Natural killer cell (primary cell): ENCODE measurements at regions of chr5 and their contacts with region 1.

Region 1: DNA sequence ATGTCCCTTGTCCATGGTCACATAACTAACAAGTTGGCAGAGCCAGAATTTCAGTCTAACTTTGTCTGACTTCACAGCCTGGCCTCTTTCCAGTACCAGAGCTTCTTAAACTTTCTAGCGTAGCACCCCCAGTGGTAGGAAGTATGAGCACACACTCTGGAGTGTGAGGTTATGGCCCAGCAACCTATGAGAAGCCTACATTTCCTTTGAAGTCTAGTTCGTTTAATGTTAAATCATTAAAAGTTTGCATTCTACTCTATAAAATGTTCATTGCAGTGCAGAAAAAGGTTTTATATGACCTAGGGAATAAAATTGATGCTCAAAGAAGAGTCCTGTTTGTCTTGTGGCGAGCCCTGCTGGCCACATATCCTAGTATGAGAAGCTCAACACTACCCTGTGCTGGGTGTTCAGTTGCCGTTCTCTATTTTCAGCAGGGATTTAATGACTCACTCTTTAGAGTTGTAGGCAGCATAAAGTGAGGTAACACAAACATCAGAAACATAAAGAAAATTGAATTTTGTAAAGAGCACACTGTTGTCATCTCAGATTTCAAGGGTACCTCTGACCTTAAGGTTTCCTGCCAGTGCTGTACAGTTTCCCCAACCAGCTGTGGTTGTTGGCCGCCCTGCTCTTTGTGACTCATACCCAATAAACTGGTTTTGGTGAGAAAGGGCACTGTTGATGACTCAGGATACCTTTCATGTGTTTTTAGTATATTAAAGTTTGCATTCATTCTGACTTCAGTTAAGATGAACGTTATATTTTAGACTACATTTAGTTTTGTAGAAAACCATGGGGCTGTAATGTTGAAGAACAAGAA is 14.3 kb downstream of the MCCC2 start:
- DNase-seq: peak; percentile 59 to 83
- ATAC-seq: peak; percentile 87 to 93 (median 90)
- H3K4me3 ChIP-seq: no peak overlapping the region
- H3K4me3 Mint-ChIP-seq: peak overlapping the region; percentile 60
- H3K27ac ChIP-seq: peak overlapping the region; percentile 64
- H3K27ac Mint-ChIP-seq: peak overlapping the region; percentile 90 to 93
- H3K4me1 ChIP-seq: peaks cover 18% of the 10 kb centered on the region
- H3K4me1 Mint-ChIP-seq: peaks cover 21 to 24% of the 10 kb centered on the region in 2 donors
- H3K27me3 ChIP-seq: no peaks in the 10 kb centered on the region
- H3K27me3 Mint-ChIP-seq: no peaks in the 10 kb centered on the region
- CTCF ChIP-seq: peak; percentile 82

Region 2: GRCh38 chr5:71533614-71534013 is 67.8 kb before region 1 on chr5:
- intact Hi-C with region 1: loop called (anchors 2 kb)
- DNase-seq: peak in 1 of 2 donors; percentile 68
- ATAC-seq: peak; percentile 76 to 97 (median 85)
- H3K4me3 ChIP-seq: no peak overlapping the region
- H3K4me3 Mint-ChIP-seq: no peak overlapping the region
- H3K27ac ChIP-seq: no peak overlapping the region
- H3K27ac Mint-ChIP-seq: peak overlapping the region; percentile 62 to 76
- H3K4me1 ChIP-seq: no peaks in the 10 kb centered on the region
- H3K4me1 Mint-ChIP-seq: peaks cover 11 to 25% of the 10 kb centered on the region in 2 donors
- H3K27me3 ChIP-seq: no peaks in the 10 kb centered on the region
- H3K27me3 Mint-ChIP-seq: no peaks in the 10 kb centered on the region
- CTCF ChIP-seq: no peak

Region 3: DNA sequence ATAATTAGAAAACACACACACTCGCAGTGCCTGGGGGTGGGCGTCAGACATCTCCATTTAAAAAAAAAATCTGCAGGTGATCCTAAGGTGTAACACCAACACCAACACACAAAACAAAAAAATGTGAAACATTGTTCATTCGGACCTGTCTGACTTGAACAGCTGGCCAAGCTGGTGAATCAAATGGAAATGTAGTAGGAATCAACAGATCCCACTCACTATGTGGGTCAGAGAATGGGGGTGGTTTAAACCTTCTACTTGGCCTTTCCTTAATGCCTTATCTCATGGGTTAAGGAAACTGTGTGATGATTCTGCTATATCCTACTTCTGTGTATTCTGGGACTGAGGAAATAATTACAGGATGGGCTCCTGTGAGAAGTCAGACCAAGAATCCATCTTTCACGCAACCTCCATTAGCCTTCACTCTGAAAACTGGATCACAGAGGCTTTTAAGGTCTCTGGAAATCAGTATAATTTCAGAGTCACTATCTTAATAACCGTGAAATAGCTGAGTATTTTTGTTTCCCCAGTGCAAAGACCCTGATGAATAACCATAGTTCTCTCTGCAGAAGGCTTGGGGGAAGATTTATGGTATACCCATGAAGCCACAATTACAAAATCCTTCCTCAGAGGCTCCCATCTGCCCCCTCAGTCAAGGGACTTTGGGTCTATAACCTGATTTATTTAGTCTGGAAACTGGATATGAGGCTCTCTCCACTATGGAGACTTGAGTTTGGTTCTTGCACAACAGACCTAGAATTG is 31.5 kb before region 1 on chr5:
- intact Hi-C with region 1: no loop called
- DNase-seq: no peak
- ATAC-seq: no peak
- H3K4me3 ChIP-seq: no peak overlapping the region
- H3K4me3 Mint-ChIP-seq: no peak overlapping the region
- H3K27ac ChIP-seq: no peak overlapping the region
- H3K27ac Mint-ChIP-seq: no peak overlapping the region
- H3K4me1 ChIP-seq: no peaks in the 10 kb centered on the region
- H3K4me1 Mint-ChIP-seq: no peaks in the 10 kb centered on the region
- H3K27me3 ChIP-seq: no peaks in the 10 kb centered on the region
- H3K27me3 Mint-ChIP-seq: no peaks in the 10 kb centered on the region
- CTCF ChIP-seq: no peak

Region 4: DNA sequence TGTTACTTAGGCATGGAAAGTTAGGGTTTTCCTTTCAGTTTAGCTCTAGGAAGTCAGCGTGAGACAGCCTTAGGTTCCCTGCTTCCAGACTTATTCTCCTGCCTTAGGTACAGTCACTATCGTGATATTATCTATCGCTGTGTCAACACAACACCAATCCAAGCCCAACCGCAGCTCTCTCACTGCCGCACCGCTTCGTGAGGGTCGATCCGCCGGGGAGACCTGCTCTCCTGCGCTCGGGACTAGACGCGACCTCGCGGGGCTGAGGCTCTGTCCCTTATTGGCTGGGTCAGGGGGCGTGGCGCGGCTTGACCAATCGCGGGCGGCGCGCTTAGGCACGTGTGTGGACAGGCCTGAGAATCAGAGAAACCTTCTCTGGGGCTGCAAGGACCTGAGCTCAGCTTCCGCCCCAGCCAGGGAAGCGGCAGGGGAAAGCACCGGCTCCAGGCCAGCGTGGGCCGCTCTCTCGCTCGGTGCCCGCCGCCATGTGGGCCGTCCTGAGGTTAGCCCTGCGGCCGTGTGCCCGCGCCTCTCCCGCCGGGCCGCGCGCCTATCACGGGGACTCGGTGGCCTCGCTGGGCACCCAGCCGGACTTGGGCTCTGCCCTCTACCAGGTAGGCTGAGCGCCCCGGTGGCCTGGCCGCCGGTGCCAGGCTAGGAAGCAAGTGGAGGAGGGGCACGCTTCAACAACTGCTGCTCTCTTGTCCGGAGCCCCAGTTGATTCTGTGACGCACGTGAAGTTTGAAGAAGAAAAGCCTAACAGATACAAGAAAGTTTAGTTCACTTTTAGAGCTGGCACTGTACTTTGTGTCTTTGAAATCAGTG is 14.3 kb before region 1 on chr5 and contains the start of gene MCCC2:
- intact Hi-C with region 1: loop called (anchors 1 kb)
- DNase-seq: peak; percentile 97 to 98
- ATAC-seq: peak; percentile 95 to 99 (median 95)
- H3K4me3 ChIP-seq: peak within 1 kb of the TSS; percentile 71
- H3K4me3 Mint-ChIP-seq: peak within 1 kb of the TSS; percentile 94
- H3K27ac ChIP-seq: peak within 1 kb of the TSS; percentile 90
- H3K27ac Mint-ChIP-seq: peak within 1 kb of the TSS; percentile 94 to 97
- H3K4me1 ChIP-seq: peaks cover 17% of the 10 kb centered on the region
- H3K4me1 Mint-ChIP-seq: peaks cover 33 to 46% of the 10 kb centered on the region in 2 donors
- H3K27me3 ChIP-seq: no peaks in the 10 kb centered on the region
- H3K27me3 Mint-ChIP-seq: no peaks in the 10 kb centered on the region
- CTCF ChIP-seq: no peak
- total RNA-seq, gene MCCC2: 23.3 to 35.2 (median 32.5) TPM

Region 5: GRCh38 chr5:71732011-71732410 is 130.6 kb after region 1 on chr5:
- intact Hi-C with region 1: no loop called
- DNase-seq: no peak
- ATAC-seq: no peak
- H3K4me3 ChIP-seq: no peak overlapping the region
- H3K4me3 Mint-ChIP-seq: no peak overlapping the region
- H3K27ac ChIP-seq: no peak overlapping the region
- H3K27ac Mint-ChIP-seq: no peak overlapping the region
- H3K4me1 ChIP-seq: no peaks in the 10 kb centered on the region
- H3K4me1 Mint-ChIP-seq: no peaks in the 10 kb centered on the region
- H3K27me3 ChIP-seq: no peaks in the 10 kb centered on the region
- H3K27me3 Mint-ChIP-seq: peaks cover 9 to 21% of the 10 kb centered on the region in 2 donors
- CTCF ChIP-seq: no peak

Region 6: DNA sequence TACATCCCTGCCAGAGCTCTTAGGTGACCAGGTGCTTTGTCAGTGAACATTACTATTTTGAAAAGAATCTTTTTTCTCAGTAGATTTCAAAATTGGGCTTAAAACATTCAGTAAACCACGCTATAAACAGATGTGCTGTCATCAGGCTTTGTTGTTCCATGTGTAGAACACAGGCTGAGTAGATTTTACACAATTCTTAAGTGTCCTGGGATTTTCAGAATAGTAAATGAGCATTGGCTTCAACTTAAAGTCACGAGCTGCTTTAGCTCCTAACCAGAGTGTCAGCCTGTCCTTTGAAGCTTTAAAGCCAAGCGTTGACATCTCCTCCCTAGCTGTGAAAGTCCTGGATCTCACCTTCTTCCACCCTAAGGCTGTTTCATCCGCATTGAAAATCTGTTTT is 201.2 kb after region 1 on chr5:
- intact Hi-C with region 1: no loop called
- DNase-seq: no peak
- ATAC-seq: no peak
- H3K4me3 ChIP-seq: no peak overlapping the region
- H3K4me3 Mint-ChIP-seq: no peak overlapping the region
- H3K27ac ChIP-seq: no peak overlapping the region
- H3K27ac Mint-ChIP-seq: no peak overlapping the region
- H3K4me1 ChIP-seq: no peaks in the 10 kb centered on the region
- H3K4me1 Mint-ChIP-seq: no peaks in the 10 kb centered on the region
- H3K27me3 ChIP-seq: no peaks in the 10 kb centered on the region
- H3K27me3 Mint-ChIP-seq: peaks cover 16 to 59% of the 10 kb centered on the region in 2 donors
- CTCF ChIP-seq: no peak

Region 7: DNA sequence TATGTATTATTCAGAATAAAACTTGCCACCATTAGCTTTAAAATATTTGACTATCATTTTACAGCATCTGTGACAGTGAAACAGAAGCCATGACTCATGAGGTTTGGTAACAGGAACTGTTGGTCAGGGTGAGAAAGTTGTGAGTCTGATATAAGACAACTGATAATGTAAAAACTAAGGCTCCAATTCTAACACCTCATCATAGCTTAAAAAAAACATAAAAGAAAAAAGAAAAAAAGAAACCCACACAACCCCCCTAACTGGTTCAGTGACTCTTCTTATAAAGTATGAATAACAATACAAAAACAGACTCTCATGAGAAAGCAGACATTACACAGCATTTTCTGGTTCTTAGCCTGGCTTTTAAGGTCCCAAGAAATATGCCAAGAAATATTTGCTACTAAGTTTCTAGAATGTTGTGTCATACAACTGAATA is 632.9 kb after region 1 on chr5:
- intact Hi-C with region 1: loop called (anchors 10 kb)
- DNase-seq: peak; percentile 18 to 81
- ATAC-seq: peak; percentile 85 to 94 (median 94)
- H3K4me3 ChIP-seq: no peak overlapping the region
- H3K4me3 Mint-ChIP-seq: peak overlapping the region; percentile 78
- H3K27ac ChIP-seq: no peak overlapping the region
- H3K27ac Mint-ChIP-seq: peak overlapping the region; percentile 33 to 89
- H3K4me1 ChIP-seq: peaks cover 15% of the 10 kb centered on the region
- H3K4me1 Mint-ChIP-seq: peaks cover 52 to 53% of the 10 kb centered on the region in 2 donors
- H3K27me3 ChIP-seq: peaks cover 3% of the 10 kb centered on the region
- H3K27me3 Mint-ChIP-seq: peaks cover 14 to 16% of the 10 kb centered on the region in 2 donors
- CTCF ChIP-seq: no peak